Breast epithelium (tissue), 4 donors: ENCODE measurements at regions of chr3 and their contacts with region 1.

Region 1: GRCh38 chr3:111956995-111957734 is 21.7 kb upstream of the ABHD10 start:
- DNase-seq: no peak
- H3K4me3 ChIP-seq: no peak overlapping the region
- H3K27ac ChIP-seq: no peak overlapping the region
- H3K4me1 ChIP-seq: peaks cover 0 to 6% of the 10 kb centered on the region in 2 donors
- H3K27me3 ChIP-seq: no peaks in the 10 kb centered on the region
- CTCF ChIP-seq: no peak
- POLR2A ChIP-seq: no peak

Region 2: DNA sequence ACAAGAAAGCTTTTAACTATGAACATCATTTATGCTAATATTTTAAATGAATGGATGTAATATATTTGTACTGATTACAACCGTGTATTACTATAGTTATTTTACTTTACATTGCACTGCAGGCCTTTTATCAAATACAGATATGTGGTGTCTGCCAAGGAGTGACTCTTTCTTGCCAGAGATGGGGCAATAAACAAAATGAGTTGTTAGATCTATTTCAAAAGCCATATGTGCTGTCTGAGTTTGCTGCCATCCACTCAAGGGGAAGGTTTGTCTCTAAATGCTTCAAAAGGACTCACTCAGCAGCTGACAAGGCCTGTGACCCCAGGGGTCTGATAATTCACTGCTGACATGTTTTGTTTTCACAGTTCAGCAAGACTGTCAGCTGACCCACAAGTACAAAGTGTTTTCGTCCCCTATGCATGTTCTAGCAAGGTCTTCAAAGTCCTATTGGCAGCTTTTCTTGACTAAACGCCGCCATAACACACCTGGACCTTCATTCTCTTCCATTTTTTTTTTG is 320.7 kb before region 1 on chr3:
- intact Hi-C with region 1: no loop called
- DNase-seq: no peak
- H3K4me3 ChIP-seq: no peak overlapping the region
- H3K27ac ChIP-seq: no peak overlapping the region
- H3K4me1 ChIP-seq: no peaks in the 10 kb centered on the region
- H3K27me3 ChIP-seq: no peaks in the 10 kb centered on the region
- CTCF ChIP-seq: no peak
- POLR2A ChIP-seq: no peak

Region 3: GRCh38 chr3:111967651-111968274 is 10.6 kb after region 1 on chr3:
- intact Hi-C with region 1: no loop called
- DNase-seq: peak; percentile 84 to 86
- H3K4me3 ChIP-seq: no peak overlapping the region
- H3K27ac ChIP-seq: no peak overlapping the region
- H3K4me1 ChIP-seq: no peaks in the 10 kb centered on the region
- H3K27me3 ChIP-seq: no peaks in the 10 kb centered on the region
- CTCF ChIP-seq: peak; percentile 83 to 91 (median 89)
- POLR2A ChIP-seq: no peak

Region 4: GRCh38 chr3:112013784-112014143 is 56.6 kb after region 1 on chr3:
- intact Hi-C with region 1: no loop called
- DNase-seq: no peak
- H3K4me3 ChIP-seq: no peak overlapping the region
- H3K27ac ChIP-seq: no peak overlapping the region
- H3K4me1 ChIP-seq: no peaks in the 10 kb centered on the region
- H3K27me3 ChIP-seq: no peaks in the 10 kb centered on the region
- CTCF ChIP-seq: peak in 1 of 3 donors; percentile 1
- POLR2A ChIP-seq: no peak

Region 5: GRCh38 chr3:112629425-112629824 is 672.3 kb after region 1 on chr3:
- intact Hi-C with region 1: loop called (anchors 10 kb)
- DNase-seq: peak in 1 of 2 donors; percentile 40
- H3K4me3 ChIP-seq: no peak overlapping the region
- H3K27ac ChIP-seq: no peak overlapping the region
- H3K4me1 ChIP-seq: no peaks in the 10 kb centered on the region
- H3K27me3 ChIP-seq: no peaks in the 10 kb centered on the region
- CTCF ChIP-seq: no peak
- POLR2A ChIP-seq: no peak